Left cardiac atrium (tissue), 4 donors: ENCODE measurements at regions of chr15 and their contacts with region 1.

Region 1: GRCh38 chr15:89057504-89058133 is 30.6 kb upstream of the ABHD2 start:
- DNase-seq: peak; percentile 82
- ATAC-seq: peak; percentile 90 to 95

Region 2: DNA sequence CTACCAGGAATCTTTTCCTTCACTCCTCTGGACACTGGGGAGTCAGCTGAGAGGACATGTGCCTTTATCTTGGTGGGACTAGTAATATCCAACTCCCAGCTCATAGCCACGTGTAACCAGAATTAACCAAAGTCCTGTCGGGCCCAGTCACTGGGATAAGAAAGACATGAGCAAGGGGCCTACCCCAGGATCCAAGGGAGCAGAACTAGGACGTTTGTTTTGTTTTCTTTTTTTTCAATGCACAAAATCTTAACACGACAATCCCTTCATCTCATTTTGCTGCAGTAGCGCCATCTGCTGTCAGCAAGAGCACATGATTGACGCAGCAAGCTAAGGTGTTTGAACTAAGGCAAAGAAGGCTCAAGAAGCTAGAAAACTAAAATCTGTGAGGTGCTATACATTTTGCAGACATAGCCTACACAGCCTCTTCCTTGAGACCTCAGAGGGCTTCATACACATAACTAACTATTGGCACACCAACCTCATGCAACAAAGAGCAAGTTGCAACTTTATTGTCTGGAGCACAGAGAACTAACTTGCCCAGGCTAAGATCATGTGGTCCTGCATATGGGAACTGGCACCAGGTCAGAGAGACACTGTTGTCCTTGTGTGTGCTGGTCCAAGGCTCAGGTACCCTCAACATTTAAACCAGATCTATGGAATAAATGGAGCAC is 120.2 kb after region 1 on chr15:
- intact Hi-C with region 1: loop called (anchors 1 to 2 kb)
- DNase-seq: peak; percentile 59
- ATAC-seq: peak; percentile 21 to 61